ENCODE measurements at regions of chr14 and their contacts with region 1.

Region 1: DNA sequence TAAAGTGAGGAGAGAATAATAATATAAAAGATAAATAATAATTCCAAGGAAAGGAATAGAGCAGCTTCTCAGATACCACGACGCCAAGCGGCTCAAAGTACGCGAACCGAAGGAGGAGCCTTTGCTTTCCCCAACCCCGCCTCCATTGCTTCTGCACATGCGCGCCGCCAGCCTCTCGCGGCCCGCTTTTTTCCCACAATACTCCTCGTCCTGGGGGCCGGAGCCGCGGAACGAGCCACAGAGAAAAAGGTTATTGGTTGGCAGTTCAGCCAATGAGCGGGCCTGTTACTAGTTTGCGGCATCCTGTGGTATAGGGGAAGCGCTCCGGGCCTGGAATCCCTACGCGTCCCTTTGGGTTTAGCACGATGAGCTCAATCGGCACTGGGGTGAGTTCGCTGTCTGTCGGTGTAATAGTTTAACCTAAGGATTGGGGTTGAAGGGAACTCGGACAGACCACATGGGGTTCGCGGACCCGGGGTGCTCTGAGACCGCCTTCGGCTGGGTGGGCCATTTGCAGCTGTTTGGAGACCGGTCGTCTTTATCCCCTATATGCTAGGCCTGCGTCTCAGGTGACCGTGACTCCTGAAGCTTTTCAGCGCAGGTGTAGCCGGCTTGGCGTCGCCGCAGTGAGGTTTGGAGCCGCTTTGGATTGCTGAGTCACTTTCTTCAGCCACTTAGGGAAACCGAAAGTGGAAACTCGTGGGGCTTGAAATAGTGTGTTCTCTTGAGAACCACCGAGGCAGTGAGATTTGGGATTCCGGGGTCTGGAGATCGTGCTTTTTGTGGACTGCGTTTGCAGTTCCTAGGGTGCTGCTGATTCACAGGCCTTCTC is at the start of gene PSMA3:
- DNase-seq: peak; percentile 98 to 99
- ATAC-seq: peak; percentile 92 to 96 (median 93)
- H3K4me3 ChIP-seq: peak within 1 kb of the TSS; percentile 89
- H3K27ac ChIP-seq: peak within 1 kb of the TSS; percentile 98
- H3K4me1 ChIP-seq: peaks cover 35% of the 10 kb centered on the region
- H3K27me3 ChIP-seq: no peaks in the 10 kb centered on the region
- CTCF ChIP-seq: no peak
- total RNA-seq, gene PSMA3: 136 to 238 (median 211) TPM

Region 2: DNA sequence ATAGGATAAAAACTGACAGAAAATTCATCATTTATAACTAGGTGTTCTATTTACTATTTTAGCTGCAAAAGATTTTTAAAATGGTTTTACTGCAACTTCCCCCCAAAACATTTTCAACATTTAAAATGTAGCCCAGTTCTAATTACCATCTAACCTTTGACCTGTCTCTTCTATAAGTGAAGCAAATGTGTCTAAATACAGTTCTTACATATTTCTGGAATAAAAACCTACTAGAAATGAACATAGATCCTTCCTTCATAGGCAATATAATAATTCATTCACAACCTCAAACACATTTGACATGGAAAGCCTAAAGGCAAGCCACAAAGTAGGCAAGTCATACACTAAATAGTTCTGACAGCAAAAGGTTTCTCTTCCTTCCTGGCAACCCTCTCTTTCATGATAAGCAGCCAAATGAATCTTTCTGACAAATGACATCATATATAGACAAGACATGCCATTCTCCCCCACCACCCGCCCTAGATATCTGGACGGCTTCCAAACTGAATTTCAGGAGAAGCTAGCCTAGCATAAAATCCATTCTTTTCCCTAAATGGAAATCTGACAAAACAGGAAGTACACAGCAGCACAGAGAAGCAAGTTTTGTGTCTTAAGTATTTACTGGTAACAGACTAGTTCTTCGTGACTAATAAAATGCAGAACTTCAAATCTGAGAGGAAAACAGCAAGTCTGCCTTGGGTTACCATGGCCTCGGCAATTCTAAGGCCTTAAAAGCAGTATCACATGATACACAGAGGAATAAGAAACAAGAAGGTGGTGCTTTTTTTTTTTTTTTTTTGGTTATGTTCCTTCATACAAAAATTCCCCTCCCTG is 36.4 kb after region 1 on chr14:
- intact Hi-C with region 1: loop called in 1 of 2 experiments (anchors 5 kb)
- DNase-seq: no peak
- ATAC-seq: peak; percentile 30 to 37 (median 32)
- H3K4me3 ChIP-seq: no peak overlapping the region
- H3K27ac ChIP-seq: peak overlapping the region; percentile 71
- H3K4me1 ChIP-seq: peaks cover 43% of the 10 kb centered on the region
- H3K27me3 ChIP-seq: no peaks in the 10 kb centered on the region
- CTCF ChIP-seq: no peak

Region 3: DNA sequence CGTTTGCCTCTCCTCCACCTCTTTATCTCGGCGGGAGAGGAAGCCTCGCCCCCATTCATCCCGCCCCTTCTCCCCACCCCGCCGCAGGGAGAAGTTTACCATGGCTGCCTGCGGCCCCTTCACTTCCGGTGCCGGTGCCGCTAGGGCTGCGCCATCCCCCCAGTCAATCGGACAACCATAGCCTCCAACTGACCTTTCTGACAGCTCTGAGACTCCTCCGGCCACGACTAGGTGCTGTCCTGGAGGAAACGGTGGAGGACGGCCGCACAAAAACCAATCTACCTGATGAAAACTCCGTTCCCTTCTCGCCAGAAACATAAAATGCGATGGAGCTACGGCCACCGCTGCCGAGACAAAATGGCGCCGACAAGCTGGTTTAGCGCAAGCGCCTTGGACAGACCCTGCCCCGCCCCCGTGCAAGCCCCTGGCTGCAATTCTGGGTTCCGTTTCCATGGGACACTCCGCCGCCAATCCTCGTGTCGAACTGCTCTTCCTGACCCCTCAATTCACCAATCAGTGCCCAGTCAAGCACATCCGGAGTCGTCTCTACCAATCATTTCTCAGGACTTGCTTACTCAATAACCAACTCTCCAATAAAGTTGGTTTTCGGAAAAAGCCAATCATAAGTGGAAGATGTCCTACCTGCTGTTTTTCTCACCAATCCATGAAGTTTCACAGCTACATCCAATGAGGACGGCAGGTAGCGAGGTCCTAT is 53.1 kb after region 1 on chr14:
- intact Hi-C with region 1: loop called (anchors 2 to 5 kb)
- DNase-seq: peak; percentile 99
- ATAC-seq: peak; percentile 95 to 97 (median 96)
- H3K4me3 ChIP-seq: peak overlapping the region; percentile 95
- H3K27ac ChIP-seq: peak overlapping the region; percentile 95
- H3K4me1 ChIP-seq: peaks cover 34% of the 10 kb centered on the region
- H3K27me3 ChIP-seq: no peaks in the 10 kb centered on the region
- CTCF ChIP-seq: peak; percentile 4

Region 4: GRCh38 chr14:58315606-58316005 is 70.8 kb after region 1 on chr14:
- intact Hi-C with region 1: no loop called
- DNase-seq: no peak
- ATAC-seq: no peak
- H3K4me3 ChIP-seq: no peak overlapping the region
- H3K27ac ChIP-seq: no peak overlapping the region
- H3K4me1 ChIP-seq: no peaks in the 10 kb centered on the region
- H3K27me3 ChIP-seq: no peaks in the 10 kb centered on the region
- CTCF ChIP-seq: no peak

Measured in psoas muscle (tissue), 8 donors.